Stomach (tissue), 19 donors: ENCODE measurements at regions of chr9 and their contacts with region 1.

Region 1: GRCh38 chr9:124320062-124320973 is 62.6 kb downstream of the NEK6 start:
- DNase-seq: peak; percentile 72 to 85
- H3K4me3 ChIP-seq: no peak overlapping the region
- H3K27ac ChIP-seq: no peak overlapping the region
- H3K4me1 ChIP-seq: peaks cover 0 to 10% (median 0%) of the 10 kb centered on the region in 4 donors
- H3K27me3 ChIP-seq: no peaks in the 10 kb centered on the region
- CTCF ChIP-seq: peak in 5 of 7 experiments; percentile 76 to 86 (median 81)
- EP300 ChIP-seq: no peak
- POLR2A ChIP-seq: no peak

Region 2: DNA sequence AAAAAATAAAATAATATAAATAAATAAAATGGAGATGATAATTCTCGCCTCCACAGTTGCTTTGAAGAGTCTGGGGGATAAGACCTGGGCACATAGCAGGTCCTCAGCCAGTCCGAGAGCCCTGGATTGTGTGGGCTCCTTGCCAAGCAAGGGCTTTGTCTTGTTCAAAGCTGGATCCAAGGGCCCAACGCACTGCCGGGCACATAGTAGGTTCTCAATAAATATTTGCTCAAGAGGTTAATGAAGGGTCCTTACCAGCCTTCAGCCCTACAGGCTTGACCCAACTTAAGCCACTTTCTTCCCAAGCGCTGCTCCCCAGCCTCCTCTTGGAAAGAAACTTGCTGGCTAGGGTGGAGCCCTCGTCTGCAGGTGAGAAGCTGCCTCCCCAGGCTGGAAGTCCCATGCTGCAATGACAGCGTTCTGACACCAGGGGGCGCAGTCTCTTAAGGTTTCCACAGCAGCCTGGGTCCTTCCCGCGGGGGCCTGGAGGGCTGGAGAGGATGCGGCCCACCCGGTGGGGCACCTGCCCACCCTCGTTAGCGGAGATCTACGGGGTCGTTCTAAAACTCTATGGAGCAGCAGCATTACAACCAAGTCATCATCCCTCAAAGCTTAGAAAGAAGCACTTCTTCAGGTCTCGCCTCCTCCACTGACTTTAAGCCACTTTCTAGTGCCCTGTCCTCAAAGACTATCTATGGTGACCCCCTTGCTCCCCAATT is 193.6 kb before region 1 on chr9:
- intact Hi-C with region 1: loop called (anchors 10 kb)
- DNase-seq: peak; percentile 83 to 87
- H3K4me3 ChIP-seq: no peak overlapping the region
- H3K27ac ChIP-seq: no peak overlapping the region
- H3K4me1 ChIP-seq: peaks cover 0 to 5% (median 2%) of the 10 kb centered on the region in 4 donors
- H3K27me3 ChIP-seq: peaks cover 0 to 16% (median 0%) of the 10 kb centered on the region in 3 donors
- CTCF ChIP-seq: peak in 6 of 7 experiments; percentile 89 to 99 (median 98)
- EP300 ChIP-seq: no peak
- POLR2A ChIP-seq: no peak

Region 3: GRCh38 chr9:124332361-124333202 is 12.3 kb after region 1 on chr9:
- intact Hi-C with region 1: no loop called
- DNase-seq: no peak
- H3K4me3 ChIP-seq: no peak overlapping the region
- H3K27ac ChIP-seq: no peak overlapping the region
- H3K4me1 ChIP-seq: no peaks in the 10 kb centered on the region
- H3K27me3 ChIP-seq: no peaks in the 10 kb centered on the region
- CTCF ChIP-seq: no peak
- EP300 ChIP-seq: no peak
- POLR2A ChIP-seq: no peak